ENCODE measurements at regions of chr22 and their contacts with region 1.

Region 1: GRCh38 chr22:37905534-37906363 is at the start of gene MICALL1:
- DNase-seq: peak; percentile 13 to 84 (median 65)
- ATAC-seq: peak; percentile 79
- H3K4me3 ChIP-seq: peak within 1 kb of the TSS; percentile 45 to 55
- H3K4me3 Mint-ChIP-seq: peak within 1 kb of the TSS; percentile 81
- H3K27ac ChIP-seq: peak within 1 kb of the TSS; percentile 35 to 70
- H3K27ac Mint-ChIP-seq: peak within 1 kb of the TSS; percentile 84
- H3K4me1 ChIP-seq: peaks cover 13% of the 10 kb centered on the region
- H3K4me1 Mint-ChIP-seq: peaks cover 33% of the 10 kb centered on the region
- H3K27me3 ChIP-seq: no peaks in the 10 kb centered on the region
- H3K27me3 Mint-ChIP-seq: no peaks in the 10 kb centered on the region
- CTCF ChIP-seq: no peak
- total RNA-seq, gene MICALL1: 15.3 to 18.1 TPM

Region 2: GRCh38 chr22:37953437-37954179 is 47.9 kb after region 1 on chr22 and contains the starts of genes C22orf23 and POLR2F:
- CTCF ChIA-PET with region 1: interaction called, 3 read pairs
- POLR2A ChIA-PET with region 1: no interaction called
- intact Hi-C with region 1: loop called in 1 of 2 experiments (anchors 1 kb)
- DNase-seq: peak; percentile 88 to 98 (median 97)
- ATAC-seq: peak; percentile 94
- H3K4me3 ChIP-seq: peak within 1 kb of the TSS; percentile 91 to 98
- H3K4me3 Mint-ChIP-seq: peak within 1 kb of the TSS; percentile 100
- H3K27ac ChIP-seq: peak within 1 kb of the TSS; percentile 62 to 79
- H3K27ac Mint-ChIP-seq: peak within 1 kb of the TSS; percentile 98
- H3K4me1 ChIP-seq: peaks cover 13% of the 10 kb centered on the region
- H3K4me1 Mint-ChIP-seq: peaks cover 45% of the 10 kb centered on the region
- H3K27me3 ChIP-seq: peaks cover 0 to 6% of the 10 kb centered on the region in 2 experiments
- H3K27me3 Mint-ChIP-seq: peaks cover 12% of the 10 kb centered on the region
- CTCF ChIP-seq: no peak
- total RNA-seq, gene C22orf23: 0.43 TPM in 1 of 2 experiments, not detected in the other
- total RNA-seq, gene POLR2F: 22.7 to 25.6 TPM

Measured in CD8-positive, alpha-beta T cell (primary cell).